BJ (cell line): ENCODE measurements at regions of chr6 and their contacts with region 1.

Region 1: DNA sequence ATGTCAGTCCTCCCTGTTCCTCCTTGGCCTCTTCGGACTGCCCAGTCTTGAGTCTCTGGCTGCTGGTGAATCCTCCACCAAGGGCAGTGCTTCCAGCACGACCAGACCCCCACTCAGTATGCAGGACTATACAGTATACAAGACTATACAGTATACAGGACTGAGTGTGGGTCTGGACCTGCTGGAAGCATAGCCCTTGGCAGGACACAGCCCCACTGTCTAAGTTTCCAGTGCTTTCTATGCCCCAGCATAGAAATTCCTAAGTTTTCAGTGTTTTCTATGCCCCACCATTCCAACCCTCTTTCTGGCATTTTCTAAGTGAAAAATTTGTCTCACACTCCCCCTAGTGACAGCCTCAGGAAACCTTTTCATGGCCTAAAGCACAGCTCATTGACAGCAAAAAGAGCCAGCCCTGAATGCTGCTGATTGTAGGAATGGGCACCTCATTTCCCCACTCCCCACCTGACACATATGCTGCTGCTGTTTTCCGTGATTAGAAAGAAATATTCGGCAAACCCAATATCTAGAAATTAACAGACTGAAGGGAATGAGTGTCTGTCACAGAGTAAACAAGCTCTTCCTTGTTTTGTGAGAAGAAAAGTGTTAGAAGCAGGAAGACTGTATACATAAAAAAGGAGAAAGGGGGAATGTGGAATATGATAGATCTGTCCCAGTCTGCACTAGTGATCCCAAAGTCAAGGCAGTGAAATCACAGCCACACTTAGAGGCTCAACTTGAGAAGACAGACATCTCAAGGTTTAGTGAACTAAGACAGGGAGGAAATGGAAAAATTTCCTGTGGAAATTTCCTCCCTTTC is 206.9 kb downstream of the IBTK start:
- DNase-seq: no peak
- H3K4me3 ChIP-seq: no peak overlapping the region
- H3K27me3 ChIP-seq: no peaks in the 10 kb centered on the region
- CTCF ChIP-seq: peak; percentile 91

Region 2: DNA sequence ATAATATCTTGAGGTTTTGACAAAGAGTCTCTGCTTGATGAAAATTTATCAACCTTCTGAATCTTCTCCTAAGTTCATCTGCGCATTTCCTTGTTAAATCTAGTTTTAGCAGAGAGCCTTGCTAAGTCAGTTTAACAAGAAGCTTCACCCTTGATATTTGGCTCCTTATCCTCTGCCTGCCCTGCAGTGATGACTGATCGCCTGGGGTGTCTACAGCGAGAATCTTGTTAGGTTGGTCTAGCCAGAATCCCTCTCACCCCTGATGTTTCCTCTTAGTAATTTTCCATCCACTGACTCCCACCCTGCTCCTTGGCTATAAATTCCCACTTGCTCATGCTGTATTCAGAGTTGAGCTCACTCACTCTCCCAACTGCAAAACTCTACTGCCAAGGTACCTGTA is 402.3 kb before region 1 on chr6:
- CTCF ChIA-PET with region 1: no interaction called
- POLR2A ChIA-PET with region 1: no interaction called
- DNase-seq: no peak
- H3K4me3 ChIP-seq: no peak overlapping the region
- H3K27me3 ChIP-seq: no peaks in the 10 kb centered on the region
- CTCF ChIP-seq: no peak

Region 3: DNA sequence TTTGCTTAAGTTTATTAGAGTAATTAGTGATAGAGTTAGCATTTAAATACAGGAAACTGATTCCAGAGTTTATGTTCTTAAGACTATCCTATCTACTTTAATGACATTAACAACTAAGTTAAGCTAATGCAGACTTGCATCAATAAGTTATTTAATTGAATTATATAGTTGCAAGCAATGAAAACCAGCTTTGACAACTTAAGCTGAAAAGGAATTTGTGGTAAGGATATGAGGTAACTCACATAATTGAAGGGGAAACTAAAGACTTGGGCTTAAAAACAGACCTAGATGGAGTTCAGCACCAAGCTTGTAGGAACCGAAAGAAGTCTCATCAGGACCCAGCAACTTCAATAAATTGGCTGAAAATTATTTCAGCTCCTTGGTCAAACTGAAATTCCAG is 15.3 kb before region 1 on chr6:
- CTCF ChIA-PET with region 1: interaction called, 17 read pairs
- POLR2A ChIA-PET with region 1: no interaction called
- DNase-seq: no peak
- H3K4me3 ChIP-seq: no peak overlapping the region
- H3K27me3 ChIP-seq: no peaks in the 10 kb centered on the region
- CTCF ChIP-seq: no peak